Activated CD8-positive, alpha-beta T cell treated with anti-CD3 and anti-CD28 coated beads, Interleukin-2, amount 10 ng/mL, durations not matched to agents 7 days and 5 days (primary cell): ENCODE measurements at regions of chr2 and their contacts with region 1.

Region 1: GRCh38 chr2:148540022-148540421 is 104.5 kb upstream of the EPC2 start:
- DNase-seq: peak; percentile 54
- ATAC-seq: peak; percentile 83
- H3K4me3 Mint-ChIP-seq: peak overlapping the region; percentile 34
- H3K27ac Mint-ChIP-seq: peak overlapping the region; percentile 87
- H3K4me1 Mint-ChIP-seq: peaks cover 28% of the 10 kb centered on the region
- H3K27me3 Mint-ChIP-seq: no peaks in the 10 kb centered on the region

Region 2: DNA sequence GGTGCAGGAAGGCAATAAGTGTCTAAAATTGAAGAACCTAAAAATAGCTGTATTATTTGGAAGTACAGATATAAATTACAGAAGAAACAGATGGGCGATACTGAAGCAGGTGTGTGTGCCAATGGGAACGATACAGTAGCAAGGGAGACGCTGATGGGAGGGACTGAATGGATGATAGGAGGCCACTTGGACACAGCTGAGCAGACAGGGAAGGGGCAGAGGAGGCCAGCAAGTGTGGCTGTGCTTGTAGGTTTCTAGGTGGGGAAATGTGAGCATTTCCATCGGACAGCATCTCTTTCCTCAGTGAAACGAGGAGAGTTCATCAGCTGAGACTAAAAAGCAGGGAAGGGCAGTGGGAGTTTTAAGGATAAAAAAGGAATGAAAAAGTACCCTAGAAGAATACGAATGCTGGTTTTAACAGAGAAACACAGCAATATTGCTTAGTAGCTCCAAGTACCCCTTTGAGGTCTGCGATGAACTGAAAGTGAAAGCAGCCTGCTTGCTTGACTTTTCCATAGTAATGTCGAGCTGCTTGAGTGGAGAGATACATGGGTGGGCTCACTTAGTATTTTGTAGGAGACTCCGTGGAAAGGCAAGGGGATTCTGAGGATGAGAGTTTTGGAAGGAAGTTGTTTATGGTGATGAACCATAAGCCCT is 12.8 kb after region 1 on chr2:
- CTCF ChIA-PET with region 1: interaction called, 35 read pairs
- POLR2A ChIA-PET with region 1: interaction called, 15 read pairs
- DNase-seq: peak; percentile 72
- ATAC-seq: peak; percentile 90
- H3K4me3 Mint-ChIP-seq: no peak overlapping the region
- H3K27ac Mint-ChIP-seq: no peak overlapping the region
- H3K4me1 Mint-ChIP-seq: no peaks in the 10 kb centered on the region
- H3K27me3 Mint-ChIP-seq: no peaks in the 10 kb centered on the region

Region 3: DNA sequence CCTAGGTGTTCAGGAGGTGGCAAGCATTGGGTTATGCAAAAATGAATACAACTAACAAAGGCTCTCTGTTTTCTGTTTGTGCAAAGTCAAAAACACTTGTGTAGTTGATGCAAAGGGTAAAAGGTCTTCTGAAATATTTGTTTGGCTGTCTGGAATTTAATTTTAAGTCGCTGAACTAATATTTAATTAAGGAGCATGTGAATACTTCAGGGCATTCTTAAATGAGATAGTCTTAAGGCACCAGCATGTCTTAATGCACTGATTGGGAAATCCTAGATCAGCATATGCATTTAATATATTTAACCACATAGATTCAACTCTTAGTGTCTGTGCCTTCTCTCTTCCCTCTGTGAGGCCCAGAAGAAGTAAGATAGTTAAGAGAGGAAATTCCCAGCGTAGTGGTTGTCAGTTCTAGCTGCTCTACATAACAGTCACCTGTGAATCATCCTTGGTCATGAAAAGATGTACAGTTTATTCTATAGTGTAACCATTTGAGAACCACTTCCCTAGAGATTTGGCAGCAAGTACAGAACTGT is 216.4 kb after region 1 on chr2:
- CTCF ChIA-PET with region 1: no interaction called
- POLR2A ChIA-PET with region 1: no interaction called
- DNase-seq: no peak
- ATAC-seq: no peak
- H3K4me3 Mint-ChIP-seq: no peak overlapping the region
- H3K27ac Mint-ChIP-seq: no peak overlapping the region
- H3K4me1 Mint-ChIP-seq: no peaks in the 10 kb centered on the region
- H3K27me3 Mint-ChIP-seq: no peaks in the 10 kb centered on the region